CD4-positive, alpha-beta memory T cell (primary cell): ENCODE measurements at regions of chr1 and their contacts with region 1.

Region 1: GRCh38 chr1:110495926-110496600 is 22.9 kb downstream of the KCNA10 start:
- DNase-seq: peak; percentile 62 to 73 (median 69)
- H3K4me3 ChIP-seq: no peak overlapping the region
- H3K4me3 Mint-ChIP-seq: no peak overlapping the region
- H3K27ac ChIP-seq: no peak overlapping the region
- H3K27ac Mint-ChIP-seq: no peak overlapping the region
- H3K4me1 ChIP-seq: no peaks in the 10 kb centered on the region
- H3K4me1 Mint-ChIP-seq: no peaks in the 10 kb centered on the region
- H3K27me3 ChIP-seq: no peaks in the 10 kb centered on the region
- H3K27me3 Mint-ChIP-seq: no peaks in the 10 kb centered on the region

Region 2: GRCh38 chr1:110190282-110190929 is 305.7 kb before region 1 on chr1:
- CTCF ChIA-PET with region 1: interaction called, 11 read pairs
- POLR2A ChIA-PET with region 1: no interaction called
- intact Hi-C with region 1: no loop called
- DNase-seq: no peak
- H3K4me3 ChIP-seq: no peak overlapping the region
- H3K4me3 Mint-ChIP-seq: no peak overlapping the region
- H3K27ac ChIP-seq: no peak overlapping the region
- H3K27ac Mint-ChIP-seq: no peak overlapping the region
- H3K4me1 ChIP-seq: no peaks in the 10 kb centered on the region
- H3K4me1 Mint-ChIP-seq: no peaks in the 10 kb centered on the region
- H3K27me3 ChIP-seq: no peaks in the 10 kb centered on the region
- H3K27me3 Mint-ChIP-seq: peaks cover 11 to 12% of the 10 kb centered on the region in 2 donors

Region 3: DNA sequence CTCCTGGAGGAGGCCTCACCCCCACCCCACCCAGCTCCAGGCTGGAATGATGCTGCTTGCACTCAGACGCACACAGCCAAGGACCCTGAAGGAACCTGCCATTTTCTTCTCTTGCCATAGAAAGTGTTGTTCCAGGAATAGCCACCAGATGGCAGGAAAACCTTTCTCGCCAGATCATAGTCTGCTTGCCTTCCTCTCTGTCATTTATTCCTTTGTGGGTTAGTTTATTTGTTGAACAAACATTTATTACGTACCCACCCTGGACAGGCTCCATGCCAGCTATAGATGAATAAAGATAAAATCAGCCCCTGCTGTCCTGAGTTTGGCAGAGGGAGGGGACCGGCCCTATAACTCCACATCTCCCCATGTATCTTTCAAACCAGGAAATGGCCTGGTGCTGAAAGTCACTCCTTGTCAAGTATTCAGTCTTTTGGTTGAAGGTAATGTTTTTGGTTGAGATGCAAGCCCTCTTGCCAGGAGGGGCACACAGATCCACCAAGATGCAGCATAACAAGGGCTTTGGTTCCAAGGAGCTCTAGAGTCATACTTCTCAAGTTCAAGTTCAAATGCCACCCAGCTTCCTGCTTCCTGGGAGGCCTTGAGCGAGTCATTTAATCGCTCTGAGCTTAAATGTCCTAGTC is 292.9 kb before region 1 on chr1:
- CTCF ChIA-PET with region 1: interaction called, 52 read pairs
- POLR2A ChIA-PET with region 1: interaction called, 5 read pairs
- intact Hi-C with region 1: loop called (anchors 1 kb)
- DNase-seq: peak; percentile 75 to 82 (median 78)
- H3K4me3 ChIP-seq: no peak overlapping the region
- H3K4me3 Mint-ChIP-seq: peak overlapping the region in 3 of 8 donors; percentile 2 to 44 (median 34)
- H3K27ac ChIP-seq: no peak overlapping the region
- H3K27ac Mint-ChIP-seq: peak overlapping the region; percentile 48 to 93 (median 83)
- H3K4me1 ChIP-seq: peaks cover 19% of the 10 kb centered on the region
- H3K4me1 Mint-ChIP-seq: peaks cover 13 to 31% (median 20%) of the 10 kb centered on the region in 4 donors
- H3K27me3 ChIP-seq: no peaks in the 10 kb centered on the region
- H3K27me3 Mint-ChIP-seq: no peaks in the 10 kb centered on the region

Region 4: GRCh38 chr1:110336300-110337039 is 159.6 kb before region 1 on chr1:
- CTCF ChIA-PET with region 1: no interaction called
- POLR2A ChIA-PET with region 1: no interaction called
- intact Hi-C with region 1: no loop called
- DNase-seq: no peak
- H3K4me3 ChIP-seq: no peak overlapping the region
- H3K4me3 Mint-ChIP-seq: peak overlapping the region in 7 of 8 donors; percentile 43 to 83 (median 75)
- H3K27ac ChIP-seq: no peak overlapping the region
- H3K27ac Mint-ChIP-seq: peak overlapping the region; percentile 47 to 92 (median 80)
- H3K4me1 ChIP-seq: peaks cover 31% of the 10 kb centered on the region
- H3K4me1 Mint-ChIP-seq: peaks cover 11 to 38% (median 30%) of the 10 kb centered on the region in 4 donors
- H3K27me3 ChIP-seq: no peaks in the 10 kb centered on the region
- H3K27me3 Mint-ChIP-seq: no peaks in the 10 kb centered on the region

Region 5: DNA sequence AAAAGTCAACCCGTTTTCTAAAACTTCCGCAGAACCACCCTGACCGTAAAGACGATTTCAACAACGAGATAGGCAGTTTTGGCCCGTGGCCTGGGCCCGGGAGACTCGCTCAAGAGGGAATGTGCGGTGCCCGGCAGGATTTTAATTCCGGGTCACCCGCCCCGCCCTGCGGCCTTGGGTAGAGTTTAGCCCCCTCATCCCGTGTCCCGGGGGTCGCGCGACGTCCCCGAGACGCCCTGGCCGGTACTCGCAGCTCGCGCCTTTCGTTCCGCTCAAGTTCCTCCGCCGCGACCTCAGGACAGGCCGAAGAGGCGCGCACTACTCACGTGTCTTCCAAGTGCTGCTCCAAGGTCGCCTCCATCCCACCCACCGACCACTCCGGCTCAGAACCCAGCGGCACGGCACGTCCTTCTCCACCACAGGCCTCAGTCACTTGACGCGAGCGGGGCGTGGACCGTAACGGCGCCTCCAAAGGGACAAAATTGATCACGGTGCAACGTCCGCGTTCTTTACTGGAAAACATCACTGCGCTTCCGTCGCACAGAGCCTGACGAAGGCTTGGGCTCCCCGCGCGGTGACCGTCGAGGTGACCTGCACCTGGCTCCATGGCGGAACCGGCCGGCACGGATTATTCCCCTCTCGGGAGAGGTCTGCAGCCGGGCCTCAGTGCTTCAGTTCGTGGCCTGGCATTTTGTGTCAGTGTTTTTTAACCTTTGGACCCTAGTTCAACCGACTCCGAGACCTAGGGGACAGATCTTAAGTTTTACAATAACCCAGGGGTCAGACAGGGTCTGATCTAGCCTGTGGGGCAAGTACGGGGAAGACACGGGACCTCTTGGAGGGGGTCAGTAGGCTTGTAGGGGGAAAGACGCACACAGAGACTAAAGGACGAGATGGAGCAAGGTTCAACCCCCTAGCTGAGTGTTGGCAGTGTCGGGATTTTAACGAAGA is 88.5 kb before region 1 on chr1 and contains the start of gene LAMTOR5:
- CTCF ChIA-PET with region 1: interaction called, 45 read pairs
- POLR2A ChIA-PET with region 1: interaction called, 4 read pairs
- intact Hi-C with region 1: loop called (anchors 1 kb)
- DNase-seq: peak; percentile 89 to 91 (median 90)
- H3K4me3 ChIP-seq: peak within 1 kb of the TSS; percentile 83 to 98
- H3K4me3 Mint-ChIP-seq: peak within 1 kb of the TSS; percentile 96 to 100 (median 99)
- H3K27ac ChIP-seq: peak within 1 kb of the TSS; percentile 87
- H3K27ac Mint-ChIP-seq: peak within 1 kb of the TSS; percentile 95 to 100 (median 99)
- H3K4me1 ChIP-seq: peaks cover 28% of the 10 kb centered on the region
- H3K4me1 Mint-ChIP-seq: peaks cover 17 to 34% (median 24%) of the 10 kb centered on the region in 4 donors
- H3K27me3 ChIP-seq: no peaks in the 10 kb centered on the region
- H3K27me3 Mint-ChIP-seq: no peaks in the 10 kb centered on the region
- total RNA-seq, gene LAMTOR5: 64.5 to 69.6 TPM

Region 6: DNA sequence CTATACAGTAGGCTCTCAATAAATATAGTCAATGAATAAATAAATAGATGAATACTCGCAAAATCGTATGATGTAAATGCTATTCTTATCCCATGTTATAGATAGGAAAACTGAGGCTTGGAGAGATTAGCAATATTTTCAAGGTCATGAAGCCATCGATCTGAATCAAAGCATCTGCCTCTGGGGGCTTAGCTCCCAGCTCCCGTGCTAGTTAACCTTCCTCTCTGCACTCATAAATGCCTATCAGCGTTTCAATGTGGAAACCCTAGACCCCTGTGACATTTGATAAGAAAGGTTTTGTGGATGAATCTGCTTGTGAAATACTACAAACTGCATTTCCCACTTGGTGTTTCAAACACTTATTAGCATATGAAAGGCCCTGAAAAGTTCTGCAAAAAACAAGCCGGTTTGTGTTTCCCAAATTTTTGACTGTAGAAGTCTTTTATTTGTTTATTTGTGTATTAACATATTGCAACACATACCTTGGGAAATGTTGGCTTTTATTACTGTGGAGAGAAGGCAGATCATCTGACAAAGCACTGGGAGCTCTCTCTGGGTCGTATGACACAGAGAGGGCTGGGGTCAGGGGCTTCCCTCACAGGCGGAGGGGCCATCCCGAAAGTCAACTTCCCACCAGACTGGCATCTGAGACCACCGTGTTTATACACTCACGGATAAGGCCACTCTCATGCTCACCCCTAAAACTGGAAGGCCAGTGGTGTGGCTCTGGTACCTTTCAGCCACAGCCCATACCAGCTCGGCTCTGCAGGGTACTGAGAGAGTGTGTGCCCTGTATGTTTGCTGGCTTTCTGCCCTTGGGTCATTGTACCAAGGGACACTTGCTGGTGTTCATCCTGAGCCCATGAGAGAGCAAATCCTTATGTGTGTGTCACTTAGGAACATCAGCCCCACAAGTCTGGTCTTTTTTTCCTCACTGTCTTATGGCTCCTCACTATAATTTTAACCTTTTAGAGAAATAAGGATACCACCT is 46.1 kb before region 1 on chr1:
- CTCF ChIA-PET with region 1: no interaction called
- POLR2A ChIA-PET with region 1: no interaction called
- intact Hi-C with region 1: no loop called
- DNase-seq: no peak
- H3K4me3 ChIP-seq: no peak overlapping the region
- H3K4me3 Mint-ChIP-seq: no peak overlapping the region
- H3K27ac ChIP-seq: no peak overlapping the region
- H3K27ac Mint-ChIP-seq: no peak overlapping the region
- H3K4me1 ChIP-seq: no peaks in the 10 kb centered on the region
- H3K4me1 Mint-ChIP-seq: peaks cover 0 to 3% (median 0%) of the 10 kb centered on the region in 4 donors
- H3K27me3 ChIP-seq: no peaks in the 10 kb centered on the region
- H3K27me3 Mint-ChIP-seq: peaks cover 9 to 17% of the 10 kb centered on the region in 2 donors

Region 7: DNA sequence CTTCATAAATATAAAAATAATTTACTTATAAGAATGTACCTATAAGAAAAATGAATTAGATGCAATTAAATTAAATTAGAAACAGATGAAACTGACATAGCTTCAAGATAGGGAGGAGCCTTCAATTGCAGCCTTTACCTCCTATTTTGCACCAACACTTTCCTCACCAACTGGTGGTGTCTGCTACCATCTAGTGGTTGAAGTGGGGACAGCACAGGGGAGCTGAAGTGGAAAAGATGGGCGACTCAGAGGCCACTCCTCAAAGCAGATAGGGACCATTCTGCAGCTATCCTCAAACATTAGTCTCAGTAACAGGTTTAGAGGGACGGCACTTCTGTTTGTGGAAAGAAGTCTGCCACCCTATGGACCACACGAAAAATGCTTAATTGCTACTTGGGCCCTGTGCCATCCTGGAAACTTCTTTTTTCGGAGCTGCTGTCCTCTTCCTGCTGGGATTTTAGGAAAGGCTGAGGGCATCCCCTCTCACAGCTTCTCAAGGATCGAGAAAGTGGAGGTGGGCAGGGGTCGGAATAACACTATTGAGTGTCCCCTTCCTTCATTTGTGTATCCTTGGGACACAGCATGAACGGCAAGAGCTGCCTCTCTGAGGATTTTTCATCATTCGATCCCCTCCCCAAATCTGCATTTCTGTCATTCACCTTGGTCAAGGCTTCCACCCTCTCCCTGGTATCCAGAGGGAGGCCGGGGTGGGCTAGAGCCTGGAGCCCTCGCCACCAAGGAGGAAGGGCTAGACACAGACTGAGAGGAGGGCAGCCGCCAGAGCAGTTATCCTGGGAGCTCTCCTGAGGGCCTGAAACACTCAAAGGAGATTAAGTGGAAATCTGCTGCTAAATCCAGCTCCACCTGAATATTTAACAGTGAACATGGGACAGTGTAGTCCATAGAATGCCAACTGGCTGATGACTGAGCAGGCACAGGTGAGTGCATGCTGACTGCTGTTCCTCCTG is 35.5 kb before region 1 on chr1:
- CTCF ChIA-PET with region 1: interaction called, 32 read pairs
- POLR2A ChIA-PET with region 1: no interaction called
- intact Hi-C with region 1: no loop called
- DNase-seq: peak; percentile 78 to 84 (median 83)
- H3K4me3 ChIP-seq: no peak overlapping the region
- H3K4me3 Mint-ChIP-seq: no peak overlapping the region
- H3K27ac ChIP-seq: no peak overlapping the region
- H3K27ac Mint-ChIP-seq: no peak overlapping the region
- H3K4me1 ChIP-seq: no peaks in the 10 kb centered on the region
- H3K4me1 Mint-ChIP-seq: no peaks in the 10 kb centered on the region
- H3K27me3 ChIP-seq: no peaks in the 10 kb centered on the region
- H3K27me3 Mint-ChIP-seq: peaks cover 0 to 2% of the 10 kb centered on the region in 2 donors

Region 8: GRCh38 chr1:110480356-110481096 is 15.5 kb before region 1 on chr1:
- CTCF ChIA-PET with region 1: interaction called, 17 read pairs
- POLR2A ChIA-PET with region 1: no interaction called
- intact Hi-C with region 1: no loop called
- DNase-seq: no peak
- H3K4me3 ChIP-seq: no peak overlapping the region
- H3K4me3 Mint-ChIP-seq: no peak overlapping the region
- H3K27ac ChIP-seq: no peak overlapping the region
- H3K27ac Mint-ChIP-seq: no peak overlapping the region
- H3K4me1 ChIP-seq: no peaks in the 10 kb centered on the region
- H3K4me1 Mint-ChIP-seq: peaks cover 0 to 7% (median 3%) of the 10 kb centered on the region in 4 donors
- H3K27me3 ChIP-seq: no peaks in the 10 kb centered on the region
- H3K27me3 Mint-ChIP-seq: peaks cover 12 to 15% of the 10 kb centered on the region in 2 donors

Region 9: GRCh38 chr1:110524311-110525251 is 28.5 kb after region 1 on chr1:
- CTCF ChIA-PET with region 1: interaction called, 14 read pairs
- POLR2A ChIA-PET with region 1: no interaction called
- intact Hi-C with region 1: no loop called
- DNase-seq: peak in 4 of 5 donors; percentile 25 to 48 (median 44)
- H3K4me3 ChIP-seq: no peak overlapping the region
- H3K4me3 Mint-ChIP-seq: peak overlapping the region in 5 of 8 donors; percentile 14 to 61 (median 51)
- H3K27ac ChIP-seq: no peak overlapping the region
- H3K27ac Mint-ChIP-seq: no peak overlapping the region
- H3K4me1 ChIP-seq: no peaks in the 10 kb centered on the region
- H3K4me1 Mint-ChIP-seq: peaks cover 0 to 6% (median 2%) of the 10 kb centered on the region in 4 donors
- H3K27me3 ChIP-seq: peaks cover 5% of the 10 kb centered on the region
- H3K27me3 Mint-ChIP-seq: peaks cover 15 to 28% of the 10 kb centered on the region in 2 donors

Region 10: GRCh38 chr1:110594456-110595352 is 98.6 kb after region 1 on chr1:
- CTCF ChIA-PET with region 1: no interaction called
- POLR2A ChIA-PET with region 1: no interaction called
- intact Hi-C with region 1: no loop called
- DNase-seq: no peak
- H3K4me3 ChIP-seq: no peak overlapping the region
- H3K4me3 Mint-ChIP-seq: no peak overlapping the region
- H3K27ac ChIP-seq: no peak overlapping the region
- H3K27ac Mint-ChIP-seq: no peak overlapping the region
- H3K4me1 ChIP-seq: no peaks in the 10 kb centered on the region
- H3K4me1 Mint-ChIP-seq: peaks cover 0 to 5% (median 2%) of the 10 kb centered on the region in 4 donors
- H3K27me3 ChIP-seq: no peaks in the 10 kb centered on the region
- H3K27me3 Mint-ChIP-seq: peaks cover 0 to 2% of the 10 kb centered on the region in 2 donors